HCT116 (cell line): ENCODE measurements at regions of chr12 and their contacts with region 1.

Region 1: GRCh38 chr12:32365473-32366064 is 33.8 kb upstream of the FGD4 start:
- DNase-seq: peak; percentile 58
- ATAC-seq: peak; percentile 91
- H3K4me3 ChIP-seq: no peak overlapping the region
- H3K27ac ChIP-seq: no peak overlapping the region
- H3K4me1 ChIP-seq: no peaks in the 10 kb centered on the region
- H3K27me3 ChIP-seq: no peaks in the 10 kb centered on the region
- CTCF ChIP-seq: peak; percentile 74 to 93 (median 76)
- POLR2A ChIP-seq: no peak
- RAD21 ChIP-seq: peak; percentile 88

Region 2: GRCh38 chr12:31650927-31651326 is 714.6 kb before region 1 on chr12:
- CTCF ChIA-PET with region 1: interaction called, 4 read pairs
- POLR2A ChIA-PET with region 1: no interaction called
- RAD21 ChIA-PET with region 1: no interaction called
- intact Hi-C with region 1: loop called (anchors 5 kb)
- DNase-seq: no peak
- ATAC-seq: no peak
- H3K4me3 ChIP-seq: no peak overlapping the region
- H3K27ac ChIP-seq: no peak overlapping the region
- H3K4me1 ChIP-seq: peaks cover 0 to 8% of the 10 kb centered on the region in 2 experiments; a peak in 2 of 4 replicates
- H3K27me3 ChIP-seq: no peaks in the 10 kb centered on the region
- CTCF ChIP-seq: no peak
- POLR2A ChIP-seq: no peak
- RAD21 ChIP-seq: no peak

Region 3: GRCh38 chr12:32455607-32456071 is 90.1 kb after region 1 on chr12:
- CTCF ChIA-PET with region 1: no interaction called
- POLR2A ChIA-PET with region 1: no interaction called
- RAD21 ChIA-PET with region 1: no interaction called
- intact Hi-C with region 1: loop called (anchors 2 kb)
- DNase-seq: peak; percentile 45
- ATAC-seq: peak; percentile 55
- H3K4me3 ChIP-seq: peak overlapping the region in 1 of 2 experiments; percentile 19; a peak in 1 of 4 replicates
- H3K27ac ChIP-seq: no peak overlapping the region
- H3K4me1 ChIP-seq: peaks cover 13 to 32% of the 10 kb centered on the region in 2 experiments
- H3K27me3 ChIP-seq: no peaks in the 10 kb centered on the region
- CTCF ChIP-seq: peak; percentile 54 to 76 (median 62); a peak in 4 of 6 replicates
- POLR2A ChIP-seq: no peak
- RAD21 ChIP-seq: peak; percentile 77

Region 4: DNA sequence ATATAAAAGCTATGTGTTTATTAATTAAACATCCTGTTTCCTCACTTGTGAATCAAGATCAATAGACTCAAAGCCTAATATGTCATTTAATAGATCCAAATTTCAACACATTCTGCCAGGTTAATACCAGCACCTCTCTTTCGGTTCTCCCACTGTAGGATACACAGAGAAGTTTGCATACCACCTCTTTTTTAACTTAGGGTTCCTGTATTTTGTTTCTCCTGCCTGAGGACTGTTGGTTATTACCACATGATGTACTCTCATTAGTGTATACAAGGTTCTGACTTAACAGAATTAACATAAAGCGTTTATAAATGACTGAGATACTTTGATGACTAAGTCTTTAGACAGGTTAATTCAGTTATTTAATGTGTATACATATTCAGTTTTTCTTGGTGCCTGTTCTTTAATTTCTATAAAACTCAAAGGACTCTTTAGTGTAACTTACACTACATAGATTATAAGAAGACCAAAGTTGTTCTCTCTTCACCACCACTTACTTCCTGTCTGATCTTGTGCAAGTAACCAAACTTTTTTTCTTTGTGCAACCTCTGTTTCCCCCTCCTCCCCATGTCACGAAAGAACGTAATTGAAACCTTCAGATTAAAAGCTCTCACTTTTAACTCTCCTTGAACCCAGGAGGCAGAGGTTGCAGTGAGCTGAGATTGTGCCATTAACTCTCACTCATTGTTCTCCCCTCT is 223.7 kb after region 1 on chr12:
- CTCF ChIA-PET with region 1: no interaction called
- POLR2A ChIA-PET with region 1: no interaction called
- RAD21 ChIA-PET with region 1: no interaction called
- intact Hi-C with region 1: no loop called
- DNase-seq: no peak
- ATAC-seq: no peak
- H3K4me3 ChIP-seq: no peak overlapping the region
- H3K27ac ChIP-seq: no peak overlapping the region
- H3K4me1 ChIP-seq: peaks cover 0 to 5% of the 10 kb centered on the region in 2 experiments; a peak in 1 of 4 replicates
- H3K27me3 ChIP-seq: no peaks in the 10 kb centered on the region
- CTCF ChIP-seq: no peak
- POLR2A ChIP-seq: no peak
- RAD21 ChIP-seq: no peak

Region 5: DNA sequence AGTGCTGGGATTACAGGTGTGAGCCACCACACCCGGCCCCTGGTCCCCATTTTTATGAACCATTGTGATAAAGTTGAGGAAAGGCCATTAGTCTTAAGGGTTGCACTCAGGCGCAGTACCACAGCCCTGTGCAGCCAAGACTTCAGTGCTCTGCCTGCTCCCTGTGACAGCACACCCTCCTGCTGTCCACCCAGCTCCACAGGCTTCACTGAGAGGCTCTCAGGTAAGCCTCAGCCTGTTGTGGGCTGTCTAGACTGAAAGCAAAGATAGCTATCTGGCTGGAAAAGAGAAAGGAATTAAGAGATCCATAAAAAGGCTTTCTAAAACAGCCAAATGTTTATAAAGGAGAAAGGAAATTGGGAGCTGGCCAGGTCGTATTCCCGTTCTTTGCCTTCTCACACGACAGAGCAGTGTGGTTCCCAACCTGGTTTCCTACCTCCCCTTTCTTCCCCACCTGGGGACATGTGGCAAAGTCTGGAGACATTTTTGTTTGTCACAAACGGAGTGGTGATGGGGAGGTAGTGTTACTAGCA is 294.4 kb after region 1 on chr12:
- CTCF ChIA-PET with region 1: interaction called, 6 read pairs
- POLR2A ChIA-PET with region 1: no interaction called
- RAD21 ChIA-PET with region 1: no interaction called
- intact Hi-C with region 1: loop called (anchors 1 kb)
- DNase-seq: no peak
- ATAC-seq: no peak
- H3K4me3 ChIP-seq: no peak overlapping the region
- H3K27ac ChIP-seq: no peak overlapping the region
- H3K4me1 ChIP-seq: peaks cover 0 to 4% of the 10 kb centered on the region in 2 experiments; a peak in 1 of 4 replicates
- H3K27me3 ChIP-seq: no peaks in the 10 kb centered on the region
- CTCF ChIP-seq: no peak
- POLR2A ChIP-seq: no peak
- RAD21 ChIP-seq: no peak

Region 6: GRCh38 chr12:32671930-32672780 is 306.6 kb after region 1 on chr12:
- CTCF ChIA-PET with region 1: interaction called, 5 read pairs
- POLR2A ChIA-PET with region 1: no interaction called
- RAD21 ChIA-PET with region 1: no interaction called
- intact Hi-C with region 1: loop called (anchors 1 kb)
- DNase-seq: peak; percentile 46
- ATAC-seq: peak; percentile 88
- H3K4me3 ChIP-seq: no peak overlapping the region
- H3K27ac ChIP-seq: no peak overlapping the region
- H3K4me1 ChIP-seq: peaks cover 0 to 3% of the 10 kb centered on the region in 2 experiments; a peak in 2 of 4 replicates
- H3K27me3 ChIP-seq: no peaks in the 10 kb centered on the region
- CTCF ChIP-seq: peak; percentile 51 to 69 (median 56); a peak in 5 of 6 replicates
- POLR2A ChIP-seq: no peak
- RAD21 ChIP-seq: peak; percentile 80

Region 7: GRCh38 chr12:34022079-34022830 is 1656.7 kb after region 1 on chr12 and contains the start of gene ALG10:
- CTCF ChIA-PET with region 1: no interaction called
- POLR2A ChIA-PET with region 1: no interaction called
- RAD21 ChIA-PET with region 1: no interaction called
- intact Hi-C with region 1: loop called (anchors 10 kb)
- DNase-seq: peak; percentile 93
- ATAC-seq: peak; percentile 100
- H3K4me3 ChIP-seq: peak within 1 kb of the TSS; percentile 79 to 87
- H3K27ac ChIP-seq: peak within 1 kb of the TSS; percentile 49
- H3K4me1 ChIP-seq: peaks cover 0 to 8% of the 10 kb centered on the region in 2 experiments; a peak in 2 of 4 replicates
- H3K27me3 ChIP-seq: no peaks in the 10 kb centered on the region
- CTCF ChIP-seq: peak; percentile 57 to 67 (median 62)
- POLR2A ChIP-seq: no peak
- RAD21 ChIP-seq: peak; percentile 86
- total RNA-seq, gene ALG10: 9.6 TPM